ENCODE measurements at regions of chr3 and their contacts with region 1.

Region 1: GRCh38 chr3:32467333-32468070 is 35.1 kb downstream of the CMTM6 start:
- DNase-seq: no peak
- H3K4me3 ChIP-seq: peak overlapping the region; percentile 26 to 44
- H3K27ac ChIP-seq: no peak overlapping the region
- H3K4me1 ChIP-seq: peaks cover 5% of the 10 kb centered on the region
- H3K27me3 ChIP-seq: no peaks in the 10 kb centered on the region
- CTCF ChIP-seq: peak; percentile 82 to 100 (median 90)
- POLR2A ChIP-seq: no peak

Region 2: DNA sequence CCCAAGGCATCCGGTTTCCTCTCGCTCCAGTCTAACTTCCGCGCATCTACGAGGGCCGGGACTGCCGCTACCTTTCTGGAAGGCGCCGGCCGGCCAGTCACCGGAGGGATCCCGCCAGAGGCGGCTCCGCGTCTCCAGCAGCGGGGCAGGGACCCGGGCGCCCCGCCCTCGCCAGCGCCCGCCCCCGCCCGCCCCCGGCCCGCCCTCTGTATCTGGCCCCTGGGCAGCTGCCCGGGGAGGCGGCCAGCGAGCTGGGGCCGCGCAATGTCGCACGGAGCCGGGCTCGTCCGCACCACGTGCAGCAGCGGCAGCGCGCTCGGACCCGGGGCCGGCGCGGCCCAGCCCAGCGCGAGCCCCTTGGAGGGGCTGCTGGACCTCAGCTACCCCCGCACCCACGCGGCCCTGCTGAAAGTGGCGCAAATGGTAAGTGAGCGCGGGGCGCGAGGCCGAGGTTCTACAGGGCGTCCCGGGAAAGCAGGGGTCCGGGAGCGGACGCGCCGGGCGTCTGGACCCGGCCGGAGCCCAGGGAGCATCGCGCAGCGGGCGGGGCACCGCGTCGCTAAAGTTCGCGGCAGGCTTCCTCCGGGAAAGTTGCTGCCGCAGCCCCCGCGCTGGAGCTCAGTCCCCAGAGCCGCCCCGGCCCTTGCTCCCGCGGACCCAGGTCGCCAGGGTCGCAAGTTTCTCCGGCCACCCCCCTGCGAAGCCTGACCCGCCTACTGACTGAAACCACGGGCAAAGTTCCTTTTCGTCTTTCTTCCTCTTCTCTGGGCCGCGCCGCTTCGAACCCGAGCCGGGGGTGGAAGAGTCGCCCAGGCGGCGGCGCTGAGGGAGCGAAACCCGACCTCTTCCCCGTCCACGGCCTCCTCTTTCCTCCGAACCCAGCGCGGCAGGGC is 75.6 kb before region 1 on chr3 and contains the start of gene CMTM7:
- intact Hi-C with region 1: loop called (anchors 10 kb)
- DNase-seq: no peak
- H3K4me3 ChIP-seq: peak within 1 kb of the TSS; percentile 63 to 71
- H3K27ac ChIP-seq: peak within 1 kb of the TSS; percentile 80
- H3K4me1 ChIP-seq: no peaks in the 10 kb centered on the region
- H3K27me3 ChIP-seq: no peaks in the 10 kb centered on the region
- CTCF ChIP-seq: no peak
- POLR2A ChIP-seq: peak in 1 of 2 donors; percentile 53
- total RNA-seq, gene CMTM7: 11.0 TPM

Region 3: GRCh38 chr3:34056951-34057390 is 1589.5 kb after region 1 on chr3:
- intact Hi-C with region 1: no loop called
- DNase-seq: no peak
- H3K4me3 ChIP-seq: no peak overlapping the region
- H3K27ac ChIP-seq: no peak overlapping the region
- H3K4me1 ChIP-seq: no peaks in the 10 kb centered on the region
- H3K27me3 ChIP-seq: no peaks in the 10 kb centered on the region
- CTCF ChIP-seq: no peak
- POLR2A ChIP-seq: no peak

Measured in vagina (tissue), 2 donors.